ENCODE measurements at regions of chr5 and their contacts with region 1.

Region 1: DNA sequence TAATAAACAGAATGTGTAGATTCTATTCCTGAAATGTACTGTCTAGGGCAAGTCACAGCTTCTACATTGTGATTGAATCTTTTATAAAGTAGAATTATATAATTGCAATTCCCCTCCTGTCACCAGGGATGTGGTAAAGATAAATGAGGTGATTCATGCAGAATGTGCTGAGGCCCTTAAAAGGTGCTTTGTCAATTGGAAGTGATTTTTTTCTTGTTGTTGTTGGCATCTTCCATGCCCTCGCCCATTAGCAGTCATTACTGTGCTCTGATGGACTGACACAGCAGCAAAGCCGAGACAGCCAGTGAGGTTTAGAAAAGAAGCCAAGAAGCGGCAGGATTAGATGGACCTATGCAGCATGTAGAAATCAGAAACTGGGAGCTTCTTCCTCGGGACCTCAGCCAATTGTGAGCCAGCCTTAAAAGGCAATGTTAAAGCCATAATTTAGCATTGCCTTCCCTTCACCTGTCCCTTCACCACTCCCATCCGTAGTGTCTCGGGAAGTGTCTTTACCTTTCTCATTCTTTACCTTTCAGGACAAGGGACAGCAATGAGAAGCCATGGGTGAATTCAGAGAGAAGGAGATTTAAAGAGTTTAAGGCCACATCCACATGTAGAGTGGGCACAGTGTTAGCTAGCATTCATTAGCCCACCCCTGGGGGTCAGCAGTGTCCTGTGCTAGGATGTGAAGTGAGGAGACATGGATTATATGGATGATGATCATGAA is 257.8 kb downstream of the PLK2 start:
- DNase-seq: peak in 1 of 2 experiments; percentile 9
- H3K4me3 ChIP-seq: no peak overlapping the region
- H3K27ac ChIP-seq: no peak overlapping the region
- H3K4me1 ChIP-seq: no peaks in the 10 kb centered on the region
- H3K27me3 ChIP-seq: no peaks in the 10 kb centered on the region
- CTCF ChIP-seq: no peak

Region 2: GRCh38 chr5:57676222-57677098 is 525.6 kb before region 1 on chr5:
- CTCF ChIA-PET with region 1: no interaction called
- POLR2A ChIA-PET with region 1: no interaction called
- intact Hi-C with region 1: no loop called
- DNase-seq: no peak
- H3K4me3 ChIP-seq: no peak overlapping the region
- H3K27ac ChIP-seq: 0 out of 2 replicates have a peak overlapping the region, but pooled peaks have one; percentile 31
- H3K4me1 ChIP-seq: peaks cover 12% of the 10 kb centered on the region
- H3K27me3 ChIP-seq: no peaks in the 10 kb centered on the region
- CTCF ChIP-seq: no peak

Region 3: DNA sequence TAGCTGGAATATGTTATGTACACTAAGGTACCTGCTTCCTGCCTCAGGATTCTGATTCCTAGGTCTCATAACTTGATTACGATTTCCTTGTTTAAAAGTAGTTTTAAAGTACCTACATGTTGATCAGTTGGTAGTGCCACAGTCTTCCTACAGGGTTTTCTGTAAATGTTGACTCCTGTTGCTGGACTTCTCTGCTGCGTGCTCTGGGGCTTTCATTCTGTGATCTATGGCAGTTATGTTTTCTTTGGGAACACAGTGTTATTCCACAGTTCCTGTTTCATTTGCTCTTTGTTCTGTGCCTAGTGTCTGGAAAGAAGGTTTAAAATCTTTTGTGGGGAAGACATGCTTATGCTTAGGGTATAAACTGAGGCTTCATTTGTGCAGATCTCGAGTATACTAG is 85.7 kb before region 1 on chr5:
- CTCF ChIA-PET with region 1: no interaction called
- POLR2A ChIA-PET with region 1: interaction called, 10 read pairs
- intact Hi-C with region 1: no loop called
- DNase-seq: no peak
- H3K4me3 ChIP-seq: no peak overlapping the region
- H3K27ac ChIP-seq: no peak overlapping the region
- H3K4me1 ChIP-seq: no peaks in the 10 kb centered on the region
- H3K27me3 ChIP-seq: no peaks in the 10 kb centered on the region
- CTCF ChIP-seq: no peak

Measured in PC-9 (cell line).